Posterior cingulate gyrus (tissue), 11 donors: ENCODE measurements at regions of chr13 and their contacts with region 1.

Region 1: GRCh38 chr13:112443995-112444860 is 68.1 kb downstream of the SPACA7 start:
- DNase-seq: peak; percentile 46 to 96 (median 76)

Region 2: DNA sequence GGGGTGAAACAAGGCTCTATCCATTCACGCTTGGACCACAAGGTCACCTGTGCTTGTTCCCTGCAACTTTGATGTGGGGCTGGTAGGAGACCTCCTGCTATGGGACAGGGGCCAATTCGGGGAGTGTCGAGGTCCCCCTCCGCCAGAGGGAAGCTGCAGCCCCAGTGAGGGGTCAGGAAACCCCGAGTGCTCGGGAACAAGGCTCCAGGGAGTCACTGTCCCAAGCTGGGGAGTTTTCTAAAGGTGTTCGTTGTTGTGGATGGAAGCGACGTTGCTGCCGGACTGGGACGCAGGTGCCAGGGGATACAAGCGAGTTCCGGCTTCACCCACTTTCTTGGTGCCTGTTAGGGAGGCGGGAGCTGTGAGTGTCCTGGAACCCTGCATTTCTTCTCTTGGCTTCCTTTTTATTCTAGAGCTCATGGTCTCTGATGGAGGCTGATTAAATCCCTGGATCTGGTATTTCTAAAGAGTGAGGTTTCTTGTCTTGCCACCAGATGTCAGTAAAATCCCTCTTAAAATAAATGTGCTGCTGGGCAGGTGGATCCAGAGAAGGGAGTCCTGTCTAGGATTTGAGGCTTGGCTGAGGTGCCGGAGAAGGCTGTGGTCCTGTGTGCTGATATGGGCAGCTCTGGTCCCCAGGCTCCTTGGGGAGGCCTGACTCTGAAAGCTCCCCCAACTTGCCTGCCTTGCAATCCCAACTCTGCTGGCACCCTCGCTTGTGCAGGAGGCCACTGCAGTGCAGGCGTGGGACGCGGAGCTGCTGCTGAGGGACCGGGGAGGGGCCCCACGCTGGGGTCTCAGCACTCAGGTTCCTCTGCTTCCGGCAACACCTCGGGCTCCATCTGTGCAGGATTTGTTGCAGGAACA is 969.9 kb before region 1 on chr13:
- intact Hi-C with region 1: loop called (anchors 1 kb)
- DNase-seq: no peak